Activated CD4-positive, alpha-beta T cell treated with anti-CD3 and anti-CD28 coated beads for 36 hours (primary cell): ENCODE measurements at regions of chr19 and their contacts with region 1.

Region 1: GRCh38 chr19:47256688-47257443 is 541 bp downstream of the CCDC9 start:
- DNase-seq: peak; percentile 100
- ATAC-seq: peak; percentile 86
- H3K4me3 Mint-ChIP-seq: peak overlapping the region; percentile 90
- H3K27ac Mint-ChIP-seq: peak overlapping the region; percentile 93
- H3K4me1 Mint-ChIP-seq: peaks cover 31% of the 10 kb centered on the region
- H3K27me3 Mint-ChIP-seq: no peaks in the 10 kb centered on the region

Region 2: DNA sequence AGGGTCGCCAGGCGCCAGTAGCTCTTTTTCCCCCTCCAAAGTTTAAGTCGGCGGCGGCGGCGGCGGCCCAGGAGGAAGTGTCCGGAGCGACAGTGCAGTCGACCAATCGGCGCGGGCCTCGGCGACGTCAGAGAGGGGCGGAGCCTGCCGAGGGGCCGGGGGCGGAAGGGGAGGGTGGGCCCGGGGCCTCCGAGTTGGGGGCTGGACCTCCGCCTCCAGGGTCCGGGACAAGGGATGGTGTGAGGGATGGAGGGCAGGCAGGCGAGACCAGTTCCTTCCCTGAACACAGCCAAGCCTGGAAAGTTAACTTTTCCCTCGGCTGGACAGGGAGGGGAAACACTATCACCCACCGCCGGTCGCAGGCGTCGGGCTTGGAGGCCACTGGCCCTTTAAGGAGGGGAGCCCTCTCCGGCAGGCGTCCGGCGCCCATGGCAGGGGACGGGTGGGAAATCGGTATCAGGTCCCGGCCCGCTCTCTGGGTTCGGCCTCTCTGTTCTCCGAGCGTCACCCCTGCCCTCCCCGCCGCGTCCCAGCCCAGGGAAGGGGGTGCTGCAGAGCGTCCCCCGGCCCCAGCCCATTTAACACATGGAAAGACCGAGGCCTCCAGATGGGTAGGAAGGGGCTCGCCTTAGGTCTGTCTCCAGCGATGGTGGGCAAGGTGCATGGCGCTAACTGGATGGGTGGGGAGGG is 539.7 kb before region 1 on chr19 and contains the start of gene PRKD2:
- CTCF ChIA-PET with region 1: no interaction called
- POLR2A ChIA-PET with region 1: no interaction called
- intact Hi-C with region 1: loop called in 1 of 2 experiments (anchors 1 kb)
- DNase-seq: peak; percentile 95
- ATAC-seq: peak; percentile 66
- H3K4me3 Mint-ChIP-seq: peak within 1 kb of the TSS; percentile 94
- H3K27ac Mint-ChIP-seq: peak within 1 kb of the TSS; percentile 95
- H3K4me1 Mint-ChIP-seq: peaks cover 40% of the 10 kb centered on the region
- H3K27me3 Mint-ChIP-seq: no peaks in the 10 kb centered on the region
- total RNA-seq, gene PRKD2: 76.0 to 78.3 TPM

Region 3: DNA sequence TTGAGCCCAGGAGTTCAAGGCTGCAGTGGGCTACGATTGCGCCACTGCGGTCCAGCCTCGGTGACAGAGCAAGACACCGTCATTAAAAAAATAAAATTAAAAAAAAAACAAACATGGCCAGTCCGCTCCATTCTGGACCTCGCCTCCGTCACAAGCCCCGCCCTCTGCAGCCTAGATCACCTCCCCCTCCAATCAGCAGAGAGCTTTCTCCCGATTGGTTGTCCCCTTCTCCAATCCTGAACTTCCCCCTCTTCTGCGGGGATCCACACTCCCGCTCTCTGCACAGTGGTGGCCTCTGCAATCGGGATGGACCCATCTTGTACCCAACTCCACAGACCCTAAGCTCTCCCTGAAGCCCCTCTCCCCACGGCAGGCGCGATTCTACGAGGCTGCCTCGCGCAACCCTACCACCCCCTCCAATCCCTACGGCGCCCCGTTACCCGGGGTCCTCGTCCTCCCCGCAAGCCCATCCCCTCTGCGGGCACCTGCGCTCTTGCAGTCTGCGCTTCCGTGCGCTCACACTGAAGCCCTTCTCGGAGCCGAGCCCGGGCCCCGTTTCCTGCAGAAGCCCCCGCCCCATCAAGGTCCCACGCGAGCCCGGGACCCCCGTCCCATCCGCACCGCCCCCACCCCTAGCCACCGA is 209.0 kb before region 1 on chr19:
- CTCF ChIA-PET with region 1: no interaction called
- POLR2A ChIA-PET with region 1: no interaction called
- intact Hi-C with region 1: loop called in 1 of 2 experiments (anchors 1 kb)
- DNase-seq: peak; percentile 92
- ATAC-seq: peak; percentile 73
- H3K4me3 Mint-ChIP-seq: peak overlapping the region; percentile 90
- H3K27ac Mint-ChIP-seq: peak overlapping the region; percentile 86
- H3K4me1 Mint-ChIP-seq: peaks cover 8% of the 10 kb centered on the region
- H3K27me3 Mint-ChIP-seq: no peaks in the 10 kb centered on the region

Region 4: DNA sequence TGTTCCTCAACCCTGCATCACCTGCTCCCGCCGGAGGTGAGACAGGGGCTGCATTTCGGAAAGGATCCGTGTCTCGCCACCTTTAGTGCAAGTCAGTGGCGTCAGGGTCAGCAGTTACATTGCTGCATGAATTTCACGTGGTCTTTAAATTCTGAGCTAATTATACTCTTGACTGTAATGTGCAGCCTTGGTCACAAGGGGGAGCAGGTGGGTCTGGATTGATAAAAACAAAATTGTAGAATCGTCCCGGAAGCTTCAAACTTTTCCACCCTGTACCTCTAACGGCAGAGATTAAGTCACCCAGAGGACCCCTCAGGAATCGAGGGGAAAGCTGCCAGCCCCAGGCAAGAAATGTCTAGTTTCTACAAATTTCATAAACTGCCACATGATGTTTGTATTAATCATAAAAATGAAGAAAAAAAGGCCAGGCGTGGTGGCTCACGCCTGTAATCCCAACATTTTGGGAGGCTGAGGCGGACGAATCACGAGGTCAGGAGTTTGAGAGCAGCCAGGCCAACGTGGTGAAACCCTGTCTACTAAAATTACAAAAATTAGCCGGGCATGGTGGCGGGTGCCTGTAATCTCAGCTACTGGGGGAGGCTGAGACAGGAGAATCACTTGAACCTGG is 46.1 kb before region 1 on chr19:
- CTCF ChIA-PET with region 1: interaction called, 11 read pairs
- POLR2A ChIA-PET with region 1: no interaction called
- intact Hi-C with region 1: no loop called
- DNase-seq: peak; percentile 89
- ATAC-seq: peak; percentile 87
- H3K4me3 Mint-ChIP-seq: no peak overlapping the region
- H3K27ac Mint-ChIP-seq: peak overlapping the region; percentile 91
- H3K4me1 Mint-ChIP-seq: peaks cover 9% of the 10 kb centered on the region
- H3K27me3 Mint-ChIP-seq: no peaks in the 10 kb centered on the region

Region 5: DNA sequence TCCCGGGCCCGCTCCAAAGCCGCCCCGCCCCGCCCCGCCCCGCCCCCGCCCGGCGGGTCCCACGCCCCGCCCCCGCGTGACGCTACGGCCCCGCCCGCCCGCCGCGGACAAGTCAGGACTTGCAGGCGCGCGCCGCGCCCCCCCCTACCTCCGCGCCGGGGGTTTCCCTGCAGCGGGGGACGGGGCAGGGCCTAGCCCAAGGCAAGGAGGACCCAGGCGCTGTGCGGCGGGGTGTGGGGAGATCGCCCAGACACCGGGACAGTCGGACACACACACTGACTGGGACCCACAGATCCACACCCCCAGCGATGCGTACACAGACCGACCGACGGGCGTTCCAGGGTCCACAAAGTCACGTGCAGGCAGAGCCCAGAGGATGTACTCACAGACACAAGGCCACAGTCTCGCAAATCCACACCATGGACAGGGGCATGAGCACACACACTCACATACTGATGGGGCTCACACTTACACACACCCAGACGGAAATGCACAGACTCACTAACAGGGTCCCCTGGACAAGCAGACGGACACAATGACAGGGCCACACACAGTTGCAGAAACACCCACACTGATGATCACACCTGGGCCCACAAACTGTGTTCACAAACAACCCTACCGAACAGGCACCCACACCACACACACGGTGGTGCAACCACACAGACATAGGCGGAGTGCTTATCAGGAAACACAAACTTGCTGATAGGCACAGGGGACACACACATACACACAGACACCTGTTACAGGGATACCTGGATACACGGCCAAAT is 25.5 kb before region 1 on chr19:
- CTCF ChIA-PET with region 1: no interaction called
- POLR2A ChIA-PET with region 1: interaction called, 10 read pairs
- intact Hi-C with region 1: loop called in 1 of 2 experiments (anchors 1 kb)
- DNase-seq: peak; percentile 95
- ATAC-seq: peak; percentile 63
- H3K4me3 Mint-ChIP-seq: peak overlapping the region; percentile 61
- H3K27ac Mint-ChIP-seq: peak overlapping the region; percentile 71
- H3K4me1 Mint-ChIP-seq: peaks cover 30% of the 10 kb centered on the region
- H3K27me3 Mint-ChIP-seq: no peaks in the 10 kb centered on the region

Region 6: DNA sequence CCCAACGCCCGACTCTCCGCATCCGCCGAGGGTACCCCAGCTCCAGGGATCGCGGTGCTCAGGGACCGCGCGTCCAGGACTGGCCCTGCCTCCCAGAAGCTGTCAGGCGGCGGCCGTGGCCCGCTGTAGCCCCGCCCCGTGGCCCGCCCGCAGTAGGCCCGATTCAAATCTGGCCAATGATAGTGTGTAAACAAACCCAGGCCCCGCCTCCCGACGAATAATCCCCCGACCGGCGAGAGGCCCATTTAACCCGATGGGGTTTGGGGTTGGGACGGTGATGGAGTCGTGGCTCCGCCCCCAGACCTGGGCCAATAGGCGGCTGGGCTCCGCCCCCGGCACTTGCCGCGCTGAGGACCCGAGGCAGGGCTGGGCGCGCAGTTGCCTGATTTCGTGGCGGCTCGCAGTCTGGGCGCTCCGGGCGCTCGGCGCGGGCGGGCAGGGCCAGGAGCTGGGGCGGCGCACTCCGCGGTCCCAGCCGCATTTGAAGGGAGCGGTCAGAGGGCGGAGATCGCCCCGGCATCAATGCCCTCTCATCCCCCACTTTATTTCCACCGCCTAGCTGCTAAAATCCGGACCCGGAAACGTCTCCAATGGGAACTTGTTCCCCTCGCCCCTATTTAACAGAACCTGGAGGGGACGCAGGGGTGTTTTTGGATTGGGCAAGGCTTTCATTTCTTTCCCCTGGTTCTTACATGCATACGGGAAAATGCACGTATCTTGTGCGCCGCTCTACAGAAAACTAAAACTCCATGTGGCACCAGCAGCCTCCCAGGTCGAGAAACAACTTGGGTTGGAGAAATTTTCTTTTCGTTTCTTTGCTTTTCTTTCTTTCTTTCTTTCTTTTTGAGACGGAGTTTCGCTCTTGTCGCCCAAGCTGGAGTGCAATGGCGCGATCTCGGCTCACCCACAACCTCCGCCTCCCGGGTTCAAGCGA is 343.6 kb after region 1 on chr19:
- CTCF ChIA-PET with region 1: no interaction called
- POLR2A ChIA-PET with region 1: no interaction called
- intact Hi-C with region 1: loop called in 1 of 2 experiments (anchors 1 kb)
- DNase-seq: peak; percentile 100
- ATAC-seq: peak; percentile 98
- H3K4me3 Mint-ChIP-seq: peak overlapping the region; percentile 79
- H3K27ac Mint-ChIP-seq: peak overlapping the region; percentile 89
- H3K4me1 Mint-ChIP-seq: peaks cover 31% of the 10 kb centered on the region
- H3K27me3 Mint-ChIP-seq: no peaks in the 10 kb centered on the region